Ovary (tissue), 10 donors: ENCODE measurements at regions of chr13 and their contacts with region 1.

Region 1: DNA sequence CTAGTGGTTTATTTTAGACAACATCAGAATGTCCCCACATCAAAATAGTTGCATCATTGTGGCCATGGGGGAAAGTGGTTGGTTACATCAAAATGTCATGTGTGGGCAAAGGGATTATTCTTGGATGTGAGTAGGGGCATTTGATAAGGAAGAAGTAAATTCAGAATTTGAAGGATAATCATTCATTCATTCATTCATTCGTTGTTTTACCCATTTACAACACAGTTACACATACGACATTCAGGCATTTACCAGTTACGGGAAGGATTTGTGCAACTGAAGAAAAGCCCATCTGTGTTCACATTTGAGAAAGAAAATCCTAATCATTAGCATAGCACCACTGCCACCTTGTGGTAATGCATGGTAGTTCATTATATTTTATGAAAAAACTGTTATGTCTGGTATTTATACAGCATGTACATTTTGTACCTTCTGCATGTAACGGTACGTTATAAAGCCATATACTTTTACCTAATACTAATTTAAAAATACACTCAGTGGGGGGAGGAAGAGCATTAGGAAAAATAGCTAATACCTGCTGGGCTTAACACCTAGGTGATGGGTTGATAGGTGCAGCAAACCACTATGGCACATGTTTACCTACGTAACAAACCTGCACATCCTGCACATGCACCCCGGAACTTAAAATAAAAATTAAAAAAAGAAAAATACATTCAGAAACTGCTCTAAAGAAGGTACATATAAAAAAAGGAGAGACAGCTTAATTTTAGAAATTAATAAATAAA is 62.1 kb downstream of the DGKH start:
- DNase-seq: peak in 1 of 5 donors; percentile 22
- H3K4me3 ChIP-seq: no peak overlapping the region
- H3K27ac ChIP-seq: no peak overlapping the region
- H3K4me1 ChIP-seq: no peaks in the 10 kb centered on the region
- H3K27me3 ChIP-seq: no peaks in the 10 kb centered on the region
- CTCF ChIP-seq: peak; percentile 68 to 86 (median 86)
- EP300 ChIP-seq: no peak
- POLR2A ChIP-seq: no peak

Region 2: GRCh38 chr13:41668130-41668757 is 442.3 kb before region 1 on chr13:
- intact Hi-C with region 1: loop called (anchors 5 to 10 kb)
- DNase-seq: peak in 4 of 5 donors; percentile 35 to 64 (median 44)
- H3K4me3 ChIP-seq: no peak overlapping the region
- H3K27ac ChIP-seq: no peak overlapping the region
- H3K4me1 ChIP-seq: no peaks in the 10 kb centered on the region
- H3K27me3 ChIP-seq: no peaks in the 10 kb centered on the region
- CTCF ChIP-seq: peak; percentile 58 to 86 (median 84)
- EP300 ChIP-seq: no peak
- POLR2A ChIP-seq: no peak

Region 3: GRCh38 chr13:41905600-41906254 is 204.9 kb before region 1 on chr13:
- intact Hi-C with region 1: loop called in 2 of 4 experiments (anchors 10 kb)
- DNase-seq: no peak
- H3K4me3 ChIP-seq: no peak overlapping the region
- H3K27ac ChIP-seq: no peak overlapping the region
- H3K4me1 ChIP-seq: no peaks in the 10 kb centered on the region
- H3K27me3 ChIP-seq: no peaks in the 10 kb centered on the region
- CTCF ChIP-seq: no peak
- EP300 ChIP-seq: no peak
- POLR2A ChIP-seq: no peak

Region 4: GRCh38 chr13:43664700-43665191 is 1554.2 kb after region 1 on chr13:
- intact Hi-C with region 1: no loop called
- DNase-seq: peak; percentile 23 to 49 (median 29)
- H3K4me3 ChIP-seq: no peak overlapping the region
- H3K27ac ChIP-seq: peak overlapping the region in 1 of 2 donors; percentile 34
- H3K4me1 ChIP-seq: peaks cover 9% of the 10 kb centered on the region
- H3K27me3 ChIP-seq: no peaks in the 10 kb centered on the region
- CTCF ChIP-seq: no peak
- EP300 ChIP-seq: no peak
- POLR2A ChIP-seq: no peak